SK-N-SH (cell line): ENCODE measurements at regions of chr13 and their contacts with region 1.

Region 1: DNA sequence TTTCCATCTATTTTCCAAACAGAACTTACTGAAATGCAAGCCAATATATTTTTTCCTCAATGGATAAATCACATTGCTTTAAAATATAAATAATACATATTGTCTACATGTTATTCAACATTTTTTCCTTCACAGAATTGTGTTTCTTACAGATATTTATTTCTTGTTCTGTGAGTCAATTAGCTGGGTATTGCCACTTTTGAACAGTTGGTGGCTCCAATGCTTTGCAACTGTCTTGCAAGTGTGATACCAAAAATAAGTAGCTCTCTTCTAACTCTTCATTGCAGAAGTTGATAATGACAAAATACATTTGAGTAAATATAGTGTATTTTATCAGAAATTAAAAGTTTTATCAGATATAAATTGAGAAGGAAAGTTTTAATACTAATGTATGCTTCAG is 17.1 kb upstream of the GPC5 start:
- DNase-seq: peak; percentile 14
- H3K4me3 ChIP-seq: no peak overlapping the region; a peak in 1 of 4 replicates
- H3K27ac ChIP-seq: no peak overlapping the region
- H3K4me1 ChIP-seq: no peaks in the 10 kb centered on the region
- H3K27me3 ChIP-seq: no peaks in the 10 kb centered on the region
- CTCF ChIP-seq: peak; percentile 61
- EP300 ChIP-seq: no peak
- RAD21 ChIP-seq: peak; percentile 95

Region 2: DNA sequence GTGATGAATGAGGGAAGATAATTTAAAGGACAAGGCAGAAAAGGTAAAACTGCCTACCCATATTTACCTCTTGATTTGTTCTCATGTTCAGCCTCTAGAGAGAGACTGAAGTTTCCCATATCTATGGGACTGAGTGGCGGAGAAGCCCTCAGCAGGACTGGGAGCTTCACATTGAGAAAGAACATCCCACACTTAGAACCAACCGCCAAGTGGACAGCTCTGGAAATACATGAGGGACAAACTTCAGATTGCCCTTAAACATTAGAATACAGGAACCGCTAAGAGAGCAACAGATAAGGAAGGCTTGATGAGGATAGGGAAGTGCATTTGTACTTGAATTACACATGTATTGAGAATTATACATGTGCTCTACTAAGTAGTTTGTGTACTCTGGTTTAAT is 349.9 kb before region 1 on chr13:
- CTCF ChIA-PET with region 1: no interaction called
- POLR2A ChIA-PET with region 1: no interaction called
- DNase-seq: no peak
- H3K4me3 ChIP-seq: no peak overlapping the region
- H3K27ac ChIP-seq: no peak overlapping the region
- H3K4me1 ChIP-seq: no peaks in the 10 kb centered on the region
- H3K27me3 ChIP-seq: no peaks in the 10 kb centered on the region
- CTCF ChIP-seq: no peak; the same call in 1 of the 2 replicates
- EP300 ChIP-seq: no peak
- RAD21 ChIP-seq: no peak

Region 3: DNA sequence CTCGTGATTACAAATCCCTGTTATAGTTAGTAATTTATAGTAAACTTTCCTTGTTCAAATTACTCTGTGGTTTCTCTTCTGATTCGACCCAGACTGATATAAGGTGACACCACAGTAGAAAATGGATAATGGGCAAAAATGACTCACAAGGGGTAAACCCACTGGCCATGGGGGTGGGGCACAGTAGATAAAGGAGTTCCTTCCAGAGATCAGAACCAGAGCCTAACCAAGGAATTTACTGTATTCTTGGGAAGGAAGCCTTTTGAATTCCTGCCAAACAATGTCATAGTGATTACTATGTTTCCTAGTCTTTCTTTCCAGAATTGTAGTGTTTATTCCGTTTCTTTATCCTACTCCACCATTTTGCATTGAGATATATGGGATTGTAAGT is 11.9 kb before region 1 on chr13:
- CTCF ChIA-PET with region 1: interaction called, 16 read pairs
- POLR2A ChIA-PET with region 1: no interaction called
- DNase-seq: no peak
- H3K4me3 ChIP-seq: no peak overlapping the region
- H3K27ac ChIP-seq: no peak overlapping the region
- H3K4me1 ChIP-seq: no peaks in the 10 kb centered on the region
- H3K27me3 ChIP-seq: no peaks in the 10 kb centered on the region
- CTCF ChIP-seq: no peak
- EP300 ChIP-seq: 0 out of 4 replicates have a peak, but pooled peaks of 1 of the 2 experiments have one; percentile 6
- RAD21 ChIP-seq: no peak